A549 (cell line): ENCODE measurements at regions of chr3 and their contacts with region 1.

Region 1: GRCh38 chr3:114418724-114419543 is 125.1 kb downstream of the TIGIT start:
- DNase-seq: peak; percentile 33 to 73
- ATAC-seq: peak; percentile 90 to 95; a peak in 5 of 6 replicates
- H3K4me3 ChIP-seq: no peak overlapping the region
- H3K27ac ChIP-seq: no peak overlapping the region
- H3K4me1 ChIP-seq: peaks cover 4% of the 10 kb centered on the region; the same call in 2 of the 3 replicates
- CTCF ChIP-seq: peak; percentile 92
- EP300 ChIP-seq: no peak
- POLR2A ChIP-seq: no peak
- RAD21 ChIP-seq: peak; percentile 61 to 62

Region 2: DNA sequence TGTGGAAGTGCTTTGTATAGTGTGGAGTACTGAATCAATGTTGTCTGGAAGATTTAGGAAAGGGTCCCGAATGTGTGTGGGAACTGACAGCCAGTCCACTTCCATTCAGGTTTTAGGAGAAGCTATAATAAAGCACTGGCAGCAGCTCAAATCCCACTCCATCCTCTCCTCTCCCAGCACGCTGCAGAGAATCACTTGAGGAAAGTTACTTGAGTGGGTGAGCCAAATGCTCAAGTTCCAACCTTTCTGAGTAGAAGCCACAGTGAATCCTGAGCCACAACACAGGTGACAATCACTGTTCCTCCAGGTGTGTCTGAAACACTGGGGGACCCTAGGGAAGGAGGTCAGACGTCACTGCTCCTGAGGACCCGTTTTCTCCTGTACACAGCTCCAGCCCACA is 18.6 kb before region 1 on chr3:
- CTCF ChIA-PET with region 1: interaction called, 12 read pairs
- POLR2A ChIA-PET with region 1: no interaction called
- DNase-seq: no peak
- ATAC-seq: no peak
- H3K4me3 ChIP-seq: no peak overlapping the region
- H3K27ac ChIP-seq: no peak overlapping the region
- H3K4me1 ChIP-seq: no peaks in the 10 kb centered on the region
- CTCF ChIP-seq: no peak
- EP300 ChIP-seq: no peak
- POLR2A ChIP-seq: no peak
- RAD21 ChIP-seq: no peak

Region 3: GRCh38 chr3:114442246-114442645 is 23.3 kb after region 1 on chr3:
- CTCF ChIA-PET with region 1: interaction called, 35 read pairs
- POLR2A ChIA-PET with region 1: no interaction called
- DNase-seq: no peak
- ATAC-seq: peak; percentile 45 to 50; a peak in 2 of 6 replicates
- H3K4me3 ChIP-seq: no peak overlapping the region
- H3K27ac ChIP-seq: no peak overlapping the region
- H3K4me1 ChIP-seq: peaks cover 15% of the 10 kb centered on the region
- CTCF ChIP-seq: no peak
- EP300 ChIP-seq: no peak
- POLR2A ChIP-seq: no peak
- RAD21 ChIP-seq: no peak

Region 4: DNA sequence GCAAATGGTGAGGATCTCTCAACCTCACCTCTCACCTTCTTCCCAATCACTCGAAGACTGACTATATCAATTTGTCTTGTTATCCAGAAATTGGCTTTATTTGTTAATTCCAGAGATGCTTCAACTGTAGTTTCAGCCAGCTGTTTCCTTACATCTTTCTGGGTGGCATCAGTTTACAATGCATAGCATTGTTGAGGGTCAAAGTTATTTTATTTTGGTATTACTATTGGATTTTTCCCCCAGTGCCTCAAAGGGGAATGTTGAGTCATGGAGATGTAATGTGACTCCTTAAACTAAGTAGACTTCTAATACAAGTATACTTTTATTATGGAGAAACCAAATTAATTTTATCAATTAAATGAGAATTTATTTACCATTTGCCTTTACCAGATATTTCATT is 226.5 kb after region 1 on chr3:
- CTCF ChIA-PET with region 1: no interaction called
- POLR2A ChIA-PET with region 1: no interaction called
- DNase-seq: no peak
- ATAC-seq: no peak
- H3K4me3 ChIP-seq: no peak overlapping the region
- H3K27ac ChIP-seq: no peak overlapping the region
- H3K4me1 ChIP-seq: peaks cover 23% of the 10 kb centered on the region
- CTCF ChIP-seq: no peak
- EP300 ChIP-seq: no peak
- POLR2A ChIP-seq: no peak
- RAD21 ChIP-seq: no peak